SK-N-SH (cell line): ENCODE measurements at regions of chr1 and their contacts with region 1.

Region 1: GRCh38 chr1:182646748-182647147 is 37.6 kb downstream of the RGS8 start:
- DNase-seq: no peak
- H3K4me3 ChIP-seq: no peak overlapping the region
- H3K27ac ChIP-seq: no peak overlapping the region
- H3K4me1 ChIP-seq: peaks cover 0 to 7% of the 10 kb centered on the region in 2 experiments; a peak in 1 of 4 replicates
- H3K27me3 ChIP-seq: no peaks in the 10 kb centered on the region; the same call in 1 of the 2 replicates
- CTCF ChIP-seq: no peak
- EP300 ChIP-seq: no peak
- RAD21 ChIP-seq: no peak

Region 2: DNA sequence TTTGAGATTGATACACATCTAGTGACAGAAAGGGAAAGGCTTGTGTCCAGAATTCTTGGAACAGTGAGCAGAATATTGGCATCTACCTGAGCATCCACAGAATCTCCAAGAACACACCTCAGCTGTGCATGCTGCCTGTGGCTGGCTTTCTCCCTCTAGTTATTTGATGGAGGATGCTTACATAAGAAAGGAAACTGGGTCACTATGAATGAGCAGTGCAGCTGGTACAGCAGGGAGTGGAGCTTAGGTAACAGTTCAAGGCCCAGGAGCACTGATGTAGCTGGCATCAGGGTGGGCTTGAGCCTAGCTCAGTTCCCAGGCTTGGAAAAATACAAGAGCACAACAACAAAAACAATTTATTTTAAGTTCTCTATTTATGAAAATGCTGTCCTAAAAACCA is 11.3 kb after region 1 on chr1:
- CTCF ChIA-PET with region 1: interaction called, 10 read pairs
- POLR2A ChIA-PET with region 1: no interaction called
- DNase-seq: no peak
- H3K4me3 ChIP-seq: no peak overlapping the region
- H3K27ac ChIP-seq: no peak overlapping the region
- H3K4me1 ChIP-seq: peaks cover 0 to 2% of the 10 kb centered on the region in 2 experiments; a peak in 1 of 4 replicates
- H3K27me3 ChIP-seq: no peaks in the 10 kb centered on the region; the same call in 1 of the 2 replicates
- CTCF ChIP-seq: no peak
- EP300 ChIP-seq: no peak
- RAD21 ChIP-seq: no peak

Region 3: GRCh38 chr1:182720463-182720862 is 73.7 kb after region 1 on chr1:
- CTCF ChIA-PET with region 1: no interaction called
- POLR2A ChIA-PET with region 1: no interaction called
- DNase-seq: no peak
- H3K4me3 ChIP-seq: no peak overlapping the region
- H3K27ac ChIP-seq: no peak overlapping the region
- H3K4me1 ChIP-seq: peaks cover 0 to 2% of the 10 kb centered on the region in 2 experiments; a peak in 1 of 4 replicates
- H3K27me3 ChIP-seq: no peaks in the 10 kb centered on the region
- CTCF ChIP-seq: peak; percentile 41
- EP300 ChIP-seq: no peak
- RAD21 ChIP-seq: no peak